K562 (cell line): ENCODE measurements at regions of chr9 and their contacts with region 1.

Region 1: DNA sequence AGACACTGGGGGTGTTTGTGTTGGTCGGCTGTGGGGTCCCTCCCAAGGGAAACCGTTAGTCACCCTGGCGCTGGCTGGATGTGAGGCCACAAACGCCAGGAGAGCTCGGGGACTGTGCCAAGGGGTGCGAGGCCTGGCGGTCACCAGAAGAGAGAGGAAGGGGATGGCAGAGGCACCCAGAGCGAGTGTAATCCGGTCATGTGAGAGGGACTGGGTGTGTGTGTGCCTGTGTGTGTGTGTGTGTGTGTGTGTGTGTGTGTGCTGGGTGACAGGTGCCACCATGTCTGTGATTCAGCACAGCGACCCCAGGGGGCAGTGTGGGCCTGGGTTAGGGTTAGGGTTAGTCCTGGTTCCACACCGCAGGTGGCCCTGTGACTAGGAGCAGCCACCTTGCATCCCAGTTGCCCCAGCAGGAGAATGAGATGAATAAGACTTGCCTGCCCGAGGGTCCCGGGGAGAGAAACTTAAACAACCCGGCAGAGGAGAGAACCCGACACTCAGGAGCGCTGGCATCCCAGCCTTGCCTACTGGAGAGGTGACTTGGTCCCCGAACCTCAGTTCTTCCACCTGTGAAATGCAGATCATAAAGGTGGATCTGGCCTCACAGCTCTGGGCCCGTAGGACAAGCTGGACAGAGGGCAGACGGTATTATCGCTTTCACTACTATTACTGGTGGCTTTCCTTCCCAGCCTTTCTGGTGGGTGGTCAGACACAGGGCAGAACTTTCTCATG is 1.4 kb upstream of the ADAMTSL2 start:
- DNase-seq: peak; percentile 78 to 83 (median 80)
- ATAC-seq: peak; percentile 91
- H3K4me3 ChIP-seq: no peak overlapping the region
- H3K27ac ChIP-seq: no peak overlapping the region
- H3K4me1 ChIP-seq: peaks cover 0 to 26% of the 10 kb centered on the region in 2 experiments; a peak in 2 of 5 replicates
- H3K27me3 ChIP-seq: peaks cover 47 to 93% of the 10 kb centered on the region in 2 experiments; a peak in 4 of 5 replicates
- CTCF ChIP-seq: peak; percentile 82 to 88 (median 85)
- EP300 ChIP-seq: no peak
- POLR2A ChIP-seq: no peak
- RAD21 ChIP-seq: peak; percentile 84 to 97

Region 2: GRCh38 chr9:133715866-133716563 is 182.9 kb after region 1 on chr9:
- CTCF ChIA-PET with region 1: no interaction called
- POLR2A ChIA-PET with region 1: no interaction called
- in situ Hi-C with region 1: no loop called
- intact Hi-C with region 1: loop called (anchors 1 kb)
- DNase-seq: peak; percentile 30 to 48 (median 32)
- ATAC-seq: peak; percentile 77
- H3K4me3 ChIP-seq: no peak overlapping the region
- H3K27ac ChIP-seq: no peak overlapping the region
- H3K4me1 ChIP-seq: peaks cover 0 to 21% of the 10 kb centered on the region in 2 experiments; a peak in 2 of 5 replicates
- H3K27me3 ChIP-seq: peaks cover 10 to 60% of the 10 kb centered on the region in 2 experiments; a peak in 4 of 5 replicates
- CTCF ChIP-seq: peak; percentile 62 to 72 (median 62)
- EP300 ChIP-seq: no peak
- POLR2A ChIP-seq: no peak
- RAD21 ChIP-seq: peak; percentile 73 to 83

Region 3: GRCh38 chr9:133726401-133727276 is 193.5 kb after region 1 on chr9:
- CTCF ChIA-PET with region 1: interaction called, 8 read pairs
- POLR2A ChIA-PET with region 1: no interaction called
- in situ Hi-C with region 1: loop called (anchors 5 kb)
- intact Hi-C with region 1: loop called (anchors 1 kb)
- DNase-seq: peak; percentile 55 to 74 (median 71)
- ATAC-seq: peak; percentile 89
- H3K4me3 ChIP-seq: no peak overlapping the region
- H3K27ac ChIP-seq: no peak overlapping the region
- H3K4me1 ChIP-seq: peaks cover 0 to 11% of the 10 kb centered on the region in 2 experiments; a peak in 2 of 5 replicates
- H3K27me3 ChIP-seq: peaks cover 3 to 11% of the 10 kb centered on the region in 2 experiments; a peak in 4 of 5 replicates
- CTCF ChIP-seq: peak; percentile 65 to 70 (median 66)
- EP300 ChIP-seq: no peak
- POLR2A ChIP-seq: no peak
- RAD21 ChIP-seq: peak; percentile 53 to 72

Region 4: GRCh38 chr9:133731876-133732638 is 199.0 kb after region 1 on chr9:
- CTCF ChIA-PET with region 1: interaction called, 3 read pairs
- POLR2A ChIA-PET with region 1: no interaction called
- in situ Hi-C with region 1: loop called (anchors 5 kb)
- intact Hi-C with region 1: no loop called
- DNase-seq: peak; percentile 45 to 87 (median 60)
- ATAC-seq: peak; percentile 87
- H3K4me3 ChIP-seq: no peak overlapping the region
- H3K27ac ChIP-seq: no peak overlapping the region
- H3K4me1 ChIP-seq: peaks cover 0 to 14% of the 10 kb centered on the region in 2 experiments; a peak in 2 of 5 replicates
- H3K27me3 ChIP-seq: peaks cover 3 to 18% of the 10 kb centered on the region in 2 experiments; a peak in 4 of 5 replicates
- CTCF ChIP-seq: no peak
- EP300 ChIP-seq: no peak
- POLR2A ChIP-seq: no peak
- RAD21 ChIP-seq: no peak